ENCODE measurements at regions of chr15 and their contacts with region 1.

Region 1: GRCh38 chr15:80072285-80072994 is 13.0 kb downstream of the ZFAND6 start:
- DNase-seq: no peak
- ATAC-seq: peak; percentile 97 to 100
- H3K4me3 ChIP-seq: peak overlapping the region; percentile 23 to 44 (median 42)
- H3K27ac ChIP-seq: peak overlapping the region; percentile 15 to 59 (median 34)
- H3K4me1 ChIP-seq: peaks cover 67 to 75% of the 10 kb centered on the region in 2 donors
- H3K27me3 ChIP-seq: no peaks in the 10 kb centered on the region
- CTCF ChIP-seq: no peak
- POLR2A ChIP-seq: no peak

Region 2: GRCh38 chr15:80114114-80114513 is 41.7 kb after region 1 on chr15:
- in situ Hi-C with region 1: no loop called
- intact Hi-C with region 1: no loop called
- DNase-seq: no peak
- ATAC-seq: no peak
- H3K4me3 ChIP-seq: no peak overlapping the region
- H3K27ac ChIP-seq: no peak overlapping the region
- H3K4me1 ChIP-seq: peaks cover 47 to 50% of the 10 kb centered on the region in 2 donors
- H3K27me3 ChIP-seq: no peaks in the 10 kb centered on the region
- CTCF ChIP-seq: no peak
- POLR2A ChIP-seq: no peak

Region 3: GRCh38 chr15:80141916-80142598 is 69.6 kb after region 1 on chr15:
- in situ Hi-C with region 1: loop called in 2 of 4 experiments (anchors 10 kb)
- intact Hi-C with region 1: no loop called
- DNase-seq: no peak
- ATAC-seq: no peak
- H3K4me3 ChIP-seq: no peak overlapping the region
- H3K27ac ChIP-seq: no peak overlapping the region
- H3K4me1 ChIP-seq: no peaks in the 10 kb centered on the region
- H3K27me3 ChIP-seq: no peaks in the 10 kb centered on the region
- CTCF ChIP-seq: no peak
- POLR2A ChIP-seq: no peak

Measured in gastrocnemius medialis (tissue), 4 donors.